Activated CD4-positive, alpha-beta memory T cell treated with anti-CD3 and anti-CD28 coated beads for 36 hours (primary cell): ENCODE measurements at regions of chr4 and their contacts with region 1.

Region 1: GRCh38 chr4:17447675-17448298 is 64.1 kb downstream of the QDPR start:
- DNase-seq: peak; percentile 51
- H3K4me3 Mint-ChIP-seq: no peak overlapping the region
- H3K27ac Mint-ChIP-seq: no peak overlapping the region
- H3K4me1 Mint-ChIP-seq: no peaks in the 10 kb centered on the region
- H3K27me3 Mint-ChIP-seq: no peaks in the 10 kb centered on the region

Region 2: DNA sequence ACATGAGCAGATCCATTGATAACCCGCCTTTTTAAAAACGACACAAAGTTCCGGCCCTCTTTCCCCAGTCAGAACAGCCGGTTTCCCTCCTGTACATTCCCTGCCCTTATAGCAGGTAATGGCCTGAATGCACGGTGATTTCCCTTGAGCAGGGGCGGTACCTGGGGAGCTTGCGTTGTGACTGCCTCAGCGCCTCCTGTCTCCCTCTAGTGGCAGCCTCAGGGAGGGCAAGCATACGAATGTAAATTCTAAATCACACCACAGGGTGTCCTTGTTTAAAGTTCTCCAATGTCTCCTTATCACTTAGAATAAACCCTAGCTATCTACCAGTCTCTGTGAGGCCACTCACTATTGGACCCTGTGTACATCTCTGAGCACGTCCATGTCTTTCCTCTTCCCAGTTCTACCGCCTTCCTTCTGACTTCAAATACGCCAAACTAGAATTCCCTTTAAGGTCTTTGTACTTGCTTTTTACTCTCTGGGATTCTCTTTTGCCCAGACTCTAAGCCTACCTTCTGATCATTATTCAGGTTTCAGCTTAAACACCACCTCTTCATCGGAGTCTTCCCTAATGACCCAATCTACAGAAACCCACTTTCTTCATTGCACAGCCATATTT is 531.0 kb before region 1 on chr4:
- CTCF ChIA-PET with region 1: interaction called, 5 read pairs
- POLR2A ChIA-PET with region 1: no interaction called
- intact Hi-C with region 1: loop called (anchors 1 kb)
- DNase-seq: peak; percentile 82
- H3K4me3 Mint-ChIP-seq: no peak overlapping the region
- H3K27ac Mint-ChIP-seq: no peak overlapping the region
- H3K4me1 Mint-ChIP-seq: no peaks in the 10 kb centered on the region
- H3K27me3 Mint-ChIP-seq: no peaks in the 10 kb centered on the region

Region 3: DNA sequence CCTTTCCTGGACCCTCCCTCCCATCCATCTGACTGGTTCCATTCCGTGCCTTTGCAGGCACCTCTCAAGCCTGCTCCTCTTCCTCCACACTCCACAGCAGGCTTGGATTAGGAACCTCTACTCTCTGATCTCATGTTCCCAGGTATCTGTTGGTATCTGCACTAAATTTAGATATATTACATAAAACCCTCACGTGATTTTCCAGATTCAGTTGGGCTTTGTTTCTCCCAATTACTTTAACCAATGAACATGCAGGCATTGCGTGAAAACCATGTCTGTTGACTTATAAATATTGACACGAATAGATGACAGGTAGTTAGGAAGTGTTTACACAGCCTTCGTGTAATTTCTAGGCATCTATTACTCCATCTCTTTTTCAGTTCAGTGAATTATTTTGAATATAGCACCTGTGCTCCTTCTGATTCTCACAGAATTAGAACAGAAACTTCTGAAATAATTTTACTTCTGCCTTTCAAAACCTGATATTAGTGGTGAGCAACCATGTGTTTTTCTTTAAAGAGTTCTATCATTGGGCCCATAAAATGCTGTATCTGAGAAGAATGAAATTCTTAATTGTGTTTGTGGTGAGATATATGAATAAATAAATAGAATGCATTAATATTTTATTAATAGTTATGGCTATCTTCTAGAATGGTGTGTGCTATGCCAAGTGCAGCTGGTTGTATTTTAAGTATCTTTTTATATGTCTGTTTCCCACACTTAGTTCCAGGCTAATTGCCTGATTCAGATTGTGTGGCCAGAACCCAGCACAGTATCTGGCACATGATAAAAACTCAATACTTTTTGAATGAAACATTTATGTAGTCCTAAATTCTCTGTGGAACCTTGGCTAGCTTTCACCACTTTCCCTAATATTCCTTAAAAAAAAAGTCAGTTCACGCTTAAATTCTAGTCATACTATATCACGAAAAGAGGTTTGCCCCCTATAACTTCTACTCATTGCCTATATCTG is 240.7 kb before region 1 on chr4:
- CTCF ChIA-PET with region 1: no interaction called
- POLR2A ChIA-PET with region 1: no interaction called
- intact Hi-C with region 1: no loop called
- DNase-seq: no peak
- H3K4me3 Mint-ChIP-seq: no peak overlapping the region
- H3K27ac Mint-ChIP-seq: no peak overlapping the region
- H3K4me1 Mint-ChIP-seq: no peaks in the 10 kb centered on the region
- H3K27me3 Mint-ChIP-seq: peaks cover 17% of the 10 kb centered on the region

Region 4: GRCh38 chr4:17347445-17347844 is 100.3 kb before region 1 on chr4:
- CTCF ChIA-PET with region 1: interaction called, 28 read pairs
- POLR2A ChIA-PET with region 1: no interaction called
- intact Hi-C with region 1: loop called (anchors 1 kb)
- DNase-seq: peak; percentile 42
- H3K4me3 Mint-ChIP-seq: no peak overlapping the region
- H3K27ac Mint-ChIP-seq: no peak overlapping the region
- H3K4me1 Mint-ChIP-seq: no peaks in the 10 kb centered on the region
- H3K27me3 Mint-ChIP-seq: no peaks in the 10 kb centered on the region

Region 5: GRCh38 chr4:17468371-17469221 is 20.8 kb after region 1 on chr4:
- CTCF ChIA-PET with region 1: interaction called, 11 read pairs
- POLR2A ChIA-PET with region 1: no interaction called
- intact Hi-C with region 1: no loop called
- DNase-seq: no peak
- H3K4me3 Mint-ChIP-seq: no peak overlapping the region
- H3K27ac Mint-ChIP-seq: no peak overlapping the region
- H3K4me1 Mint-ChIP-seq: no peaks in the 10 kb centered on the region
- H3K27me3 Mint-ChIP-seq: no peaks in the 10 kb centered on the region

Region 6: DNA sequence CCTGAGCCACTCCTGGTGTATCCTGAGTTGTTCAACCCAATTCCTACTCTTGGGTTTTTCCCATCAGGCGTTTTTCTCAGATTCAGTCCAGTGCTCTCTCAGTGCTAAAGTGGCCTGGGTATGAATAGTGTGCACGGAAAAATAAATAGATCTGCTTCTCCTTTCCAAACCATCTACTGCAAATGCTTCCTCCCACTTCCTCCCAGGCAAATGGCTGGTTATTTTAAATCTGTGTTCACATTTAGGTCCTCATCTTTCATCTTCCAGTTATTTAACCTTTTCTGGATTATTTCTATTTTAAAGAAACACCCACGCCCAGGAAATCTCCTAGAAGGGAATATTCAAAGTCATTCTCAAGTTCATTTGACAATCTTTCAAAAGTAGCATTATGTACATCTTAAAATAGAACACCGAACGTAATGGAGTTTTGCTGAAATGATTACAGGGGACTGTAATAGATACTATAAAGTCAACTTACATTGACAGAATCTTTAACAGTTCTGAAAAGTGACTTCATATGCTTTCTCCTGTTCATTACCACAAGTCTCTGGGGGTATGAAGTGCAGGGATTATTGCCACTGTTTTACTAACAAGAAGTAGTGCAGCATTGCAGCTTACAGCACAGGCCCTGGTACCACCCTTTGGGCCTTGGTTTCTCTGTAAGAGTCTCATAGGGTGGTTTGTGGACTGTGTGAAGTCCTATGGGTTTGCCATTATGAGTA is 232.9 kb after region 1 on chr4:
- CTCF ChIA-PET with region 1: no interaction called
- POLR2A ChIA-PET with region 1: no interaction called
- intact Hi-C with region 1: no loop called
- DNase-seq: no peak
- H3K4me3 Mint-ChIP-seq: no peak overlapping the region
- H3K27ac Mint-ChIP-seq: no peak overlapping the region
- H3K4me1 Mint-ChIP-seq: no peaks in the 10 kb centered on the region
- H3K27me3 Mint-ChIP-seq: peaks cover 5% of the 10 kb centered on the region